Esophagus muscularis mucosa (tissue), 4 donors: ENCODE measurements at regions of chr19 and their contacts with region 1.

Region 1: DNA sequence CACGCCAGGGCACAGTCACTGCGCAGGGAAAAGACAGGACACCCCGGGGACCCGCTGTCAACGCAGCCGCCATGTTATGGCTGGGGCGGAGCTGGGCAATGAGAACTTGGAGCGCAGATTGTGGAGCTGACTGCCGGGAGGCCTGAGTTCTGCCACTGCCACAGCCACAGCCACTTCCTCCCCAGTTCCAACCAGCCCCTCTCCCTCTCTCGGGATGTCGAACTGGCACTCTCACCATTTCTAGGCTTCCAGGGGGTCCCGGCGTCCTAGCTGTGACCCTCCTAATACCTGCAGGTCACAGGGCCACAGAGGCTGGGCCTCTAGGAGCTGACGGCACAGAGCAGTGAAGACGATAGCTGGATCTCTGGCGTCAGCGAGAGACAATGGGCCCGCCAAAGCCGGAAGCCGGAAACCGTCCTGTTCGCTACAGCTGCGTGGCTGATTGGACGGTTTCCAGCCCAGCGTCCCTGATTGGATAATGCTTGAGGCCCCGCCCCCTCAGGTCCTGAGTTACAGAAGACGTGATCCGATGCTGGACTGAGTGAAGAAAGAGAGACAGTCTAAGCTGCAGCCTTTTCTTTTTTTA is at the start of gene ZNF506:
- DNase-seq: peak; percentile 100
- H3K4me3 ChIP-seq: peak within 1 kb of the TSS; percentile 70 to 82 (median 75)
- H3K27ac ChIP-seq: peak within 1 kb of the TSS; percentile 87 to 96 (median 92)
- H3K4me1 ChIP-seq: peaks cover 15 to 49% (median 33%) of the 10 kb centered on the region in 4 donors
- H3K27me3 ChIP-seq: no peaks in the 10 kb centered on the region
- CTCF ChIP-seq: no peak
- EP300 ChIP-seq: no peak
- POLR2A ChIP-seq: peak; percentile 62
- total RNA-seq, gene ZNF506: 18.5 to 24.1 (median 20.6) TPM

Region 2: DNA sequence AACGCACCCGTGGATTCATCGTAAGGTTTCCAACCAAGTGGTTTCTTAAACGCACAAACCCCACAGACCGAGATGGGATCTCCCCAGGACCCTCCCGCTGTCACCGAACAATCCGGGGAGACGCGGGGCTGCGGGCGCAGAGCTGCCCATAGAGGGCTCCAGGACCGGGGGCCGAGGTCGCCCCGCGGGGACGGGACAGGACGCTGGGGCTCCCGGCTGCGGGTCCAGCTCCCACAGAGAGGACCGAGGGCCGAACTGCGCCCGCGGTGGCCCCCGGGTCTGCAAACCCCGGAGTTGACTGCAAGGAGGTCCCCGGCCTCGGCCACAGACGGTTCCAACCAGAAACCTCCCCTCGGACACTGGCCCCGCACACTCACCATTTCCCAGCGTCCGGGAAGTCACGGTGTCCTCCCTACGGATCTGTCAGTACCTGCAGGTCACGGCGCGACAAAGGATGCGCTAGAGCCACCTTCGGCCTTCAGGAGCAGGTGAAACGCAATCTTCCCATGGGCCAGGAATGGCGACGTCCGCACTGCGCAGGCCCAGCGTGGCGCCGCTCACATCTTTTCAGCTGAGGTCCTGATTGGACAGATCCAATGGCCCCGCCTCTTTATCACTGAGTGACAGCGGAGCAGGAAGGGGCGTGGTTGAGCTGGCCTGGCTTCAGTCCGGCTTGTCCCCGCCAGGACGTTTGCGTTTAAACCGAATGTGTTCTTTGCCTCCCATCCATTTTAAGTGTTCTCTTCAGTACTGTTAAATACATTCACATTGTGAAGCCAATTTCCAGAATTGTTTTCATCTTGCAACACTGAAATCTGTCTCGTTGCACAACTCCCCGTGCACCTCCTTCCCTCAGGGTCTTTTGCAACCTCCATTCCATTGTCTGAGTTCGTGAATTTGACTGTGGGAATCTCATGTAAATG is 88.6 kb before region 1 on chr19 and contains the start of gene ZNF14:
- intact Hi-C with region 1: loop called (anchors 5 kb)
- DNase-seq: peak; percentile 98
- H3K4me3 ChIP-seq: peak within 1 kb of the TSS; percentile 69 to 93 (median 88)
- H3K27ac ChIP-seq: peak within 1 kb of the TSS; percentile 78 to 82 (median 80)
- H3K4me1 ChIP-seq: peaks cover 0 to 24% (median 16%) of the 10 kb centered on the region in 4 donors
- H3K27me3 ChIP-seq: no peaks in the 10 kb centered on the region
- CTCF ChIP-seq: peak in 1 of 3 experiments; percentile 25
- EP300 ChIP-seq: no peak
- POLR2A ChIP-seq: no peak
- total RNA-seq, gene ZNF14: 5.1 to 7.9 (median 6.2) TPM

Region 3: DNA sequence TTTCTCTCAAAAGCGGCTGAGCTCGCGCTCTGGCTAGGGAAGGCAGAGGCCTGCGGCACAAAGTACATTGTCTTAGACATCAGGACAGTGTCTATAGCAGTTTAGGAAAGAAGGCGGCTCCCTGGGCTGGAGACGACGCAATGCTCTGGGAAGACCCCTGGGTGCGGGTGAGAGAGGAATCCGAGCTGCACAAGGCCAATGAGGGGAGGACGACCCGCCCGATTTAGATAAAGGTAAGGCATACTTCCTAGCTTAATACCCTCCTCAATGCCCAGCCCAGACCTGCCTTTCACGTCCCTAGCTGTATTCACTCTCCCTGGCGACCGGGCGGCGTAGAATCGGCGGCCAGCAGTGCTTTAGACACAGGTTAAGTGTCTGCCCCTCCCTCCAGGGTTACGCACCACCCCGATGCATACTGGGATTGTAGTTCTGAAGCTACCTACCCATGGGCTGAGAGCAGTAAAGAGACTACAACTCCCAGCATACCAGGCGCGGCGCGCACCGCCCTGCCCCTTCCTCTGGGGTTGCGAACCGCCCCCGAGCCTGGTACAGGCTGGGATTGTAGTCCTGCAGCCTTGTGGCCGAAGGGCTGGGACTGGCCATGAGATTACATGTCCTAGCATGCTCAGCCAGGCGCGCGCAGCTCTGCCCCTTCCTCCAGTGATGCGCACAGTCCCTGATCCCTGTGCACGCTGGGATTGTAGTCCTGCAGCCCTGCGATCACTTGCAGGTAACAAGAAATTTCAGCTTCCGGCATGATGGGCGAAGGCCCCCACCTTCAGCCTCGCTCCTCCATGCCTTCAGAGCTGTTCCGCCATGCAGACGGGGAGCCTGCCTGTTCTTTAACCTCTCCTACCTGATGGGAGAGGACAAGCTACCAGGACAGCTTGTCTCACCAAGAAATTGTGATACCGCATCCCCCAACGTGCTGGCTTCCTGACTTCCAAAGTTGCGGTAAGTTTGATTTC is 45.1 kb before region 1 on chr19:
- intact Hi-C with region 1: loop called (anchors 5 kb)
- DNase-seq: peak; percentile 99
- H3K4me3 ChIP-seq: peak overlapping the region; percentile 68 to 87 (median 76)
- H3K27ac ChIP-seq: peak overlapping the region; percentile 71 to 82 (median 76)
- H3K4me1 ChIP-seq: peaks cover 14 to 29% (median 23%) of the 10 kb centered on the region in 4 donors
- H3K27me3 ChIP-seq: no peaks in the 10 kb centered on the region
- CTCF ChIP-seq: peak in 1 of 3 experiments; percentile 8
- EP300 ChIP-seq: no peak
- POLR2A ChIP-seq: no peak

Region 4: DNA sequence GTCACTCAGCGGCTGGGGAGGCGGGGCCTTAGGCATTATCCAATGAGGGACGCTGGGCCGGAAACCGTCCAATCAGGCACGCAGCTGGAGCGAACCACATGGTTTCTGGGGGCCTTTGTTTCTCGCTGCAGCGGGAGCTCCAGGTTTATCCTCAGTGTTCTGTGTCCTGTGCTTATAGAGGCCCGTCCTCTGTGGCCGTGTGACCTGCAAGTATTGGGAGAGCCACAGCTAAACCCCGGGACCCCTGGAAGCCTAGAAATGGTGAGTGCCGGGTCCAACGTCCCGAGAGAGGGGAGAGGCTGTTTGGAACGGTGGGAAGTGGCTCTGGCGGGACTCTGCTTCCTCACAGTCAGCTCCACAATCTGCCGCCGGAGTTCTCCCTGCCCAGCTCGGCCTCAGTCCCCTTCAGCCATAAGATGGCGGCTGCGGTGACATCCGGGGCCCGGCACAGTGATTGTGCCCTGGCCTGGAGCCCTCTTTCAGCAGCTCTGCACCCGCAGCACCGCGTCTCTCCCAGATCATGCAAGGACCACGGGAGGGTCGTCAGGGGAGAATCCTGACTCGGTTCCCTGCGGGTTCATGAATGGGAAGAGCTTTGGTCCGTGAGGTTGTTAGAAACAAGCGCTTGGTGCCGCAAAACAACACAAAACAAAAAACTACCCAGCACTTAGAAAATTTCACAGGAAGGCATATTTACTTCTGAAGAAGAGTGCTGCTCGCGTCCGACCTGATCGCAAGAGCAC is 44.5 kb after region 1 on chr19 and contains the start of gene ZNF253:
- intact Hi-C with region 1: loop called (anchors 5 kb)
- DNase-seq: peak; percentile 99
- H3K4me3 ChIP-seq: peak within 1 kb of the TSS; percentile 64 to 82 (median 72)
- H3K27ac ChIP-seq: peak within 1 kb of the TSS; percentile 85 to 96 (median 91)
- H3K4me1 ChIP-seq: peaks cover 29 to 44% (median 35%) of the 10 kb centered on the region in 4 donors
- H3K27me3 ChIP-seq: no peaks in the 10 kb centered on the region
- CTCF ChIP-seq: no peak
- EP300 ChIP-seq: no peak
- POLR2A ChIP-seq: peak; percentile 74
- total RNA-seq, gene ZNF253: 5.1 to 7.1 (median 6.1) TPM